ENCODE measurements at regions of chr18 and their contacts with region 1.

Region 1: GRCh38 chr18:3281456-3282400 is 19.8 kb downstream of the MYL12B start:
- DNase-seq: peak in 7 of 9 donors; percentile 51 to 77 (median 68)
- ATAC-seq: peak; percentile 93
- H3K4me3 ChIP-seq: no peak overlapping the region
- H3K4me3 Mint-ChIP-seq: no peak overlapping the region
- H3K27ac ChIP-seq: no peak overlapping the region
- H3K27ac Mint-ChIP-seq: no peak overlapping the region
- H3K4me1 ChIP-seq: no peaks in the 10 kb centered on the region
- H3K4me1 Mint-ChIP-seq: peaks cover 0 to 8% (median 0%) of the 10 kb centered on the region in 7 donors
- H3K27me3 ChIP-seq: no peaks in the 10 kb centered on the region
- H3K27me3 Mint-ChIP-seq: no peaks in the 10 kb centered on the region

Region 2: DNA sequence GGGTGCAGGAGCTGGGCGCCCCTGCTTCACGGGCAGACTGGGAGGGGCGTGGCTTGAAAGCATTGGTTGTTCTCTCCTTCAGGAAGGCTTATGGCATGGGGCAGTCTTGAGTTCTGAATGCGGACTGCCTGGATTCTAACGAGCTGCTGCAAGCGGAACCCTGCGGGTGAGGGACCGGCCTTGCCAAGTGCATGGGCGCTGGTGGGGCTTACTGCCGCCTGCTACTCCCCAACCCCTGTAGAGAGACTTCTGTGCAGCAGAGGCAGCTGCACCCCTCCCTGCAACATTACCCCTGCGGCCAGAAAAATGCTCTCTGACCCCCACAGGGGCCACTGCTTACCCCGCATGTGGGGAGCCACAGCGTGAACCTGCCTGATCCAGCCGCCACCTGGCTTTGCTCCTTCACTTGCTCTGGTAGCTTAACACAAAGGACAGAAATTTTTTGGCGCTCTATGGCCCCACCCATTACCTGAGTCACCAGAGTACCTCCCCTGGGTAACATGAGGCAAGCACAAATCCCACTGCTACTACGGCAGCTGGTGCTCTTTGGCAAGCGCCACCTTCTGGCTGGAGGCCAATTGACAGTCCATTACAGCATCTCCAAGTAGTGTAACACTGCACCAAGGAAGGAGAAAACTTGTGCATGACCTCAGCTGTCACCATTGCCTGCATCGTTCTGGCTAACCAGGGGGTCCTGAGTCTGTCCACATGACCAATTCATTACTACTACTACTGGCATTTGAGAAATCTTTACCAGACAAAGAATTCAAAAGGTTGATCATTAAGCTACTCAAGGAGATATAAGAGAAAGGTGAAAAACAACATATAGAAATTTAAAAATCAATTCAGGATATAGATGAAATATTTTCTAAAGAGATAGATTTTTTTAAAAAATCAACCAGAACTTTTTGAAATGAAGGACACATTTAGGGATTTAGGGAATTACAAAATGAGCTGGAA is 15.6 kb after region 1 on chr18:
- CTCF ChIA-PET with region 1: interaction called, 3 read pairs
- POLR2A ChIA-PET with region 1: interaction called, 7 read pairs
- intact Hi-C with region 1: loop called (anchors 1 to 2 kb)
- DNase-seq: peak; percentile 74 to 93 (median 90)
- ATAC-seq: peak; percentile 100
- H3K4me3 ChIP-seq: peak overlapping the region; percentile 60
- H3K4me3 Mint-ChIP-seq: peak overlapping the region; percentile 89 to 98 (median 95)
- H3K27ac ChIP-seq: peak overlapping the region; percentile 62
- H3K27ac Mint-ChIP-seq: peak overlapping the region; percentile 21 to 93 (median 84)
- H3K4me1 ChIP-seq: peaks cover 6 to 9% of the 10 kb centered on the region in 2 donors
- H3K4me1 Mint-ChIP-seq: peaks cover 0 to 16% (median 10%) of the 10 kb centered on the region in 7 donors
- H3K27me3 ChIP-seq: no peaks in the 10 kb centered on the region
- H3K27me3 Mint-ChIP-seq: peaks cover 13 to 41% (median 30%) of the 10 kb centered on the region in 5 donors

Region 3: DNA sequence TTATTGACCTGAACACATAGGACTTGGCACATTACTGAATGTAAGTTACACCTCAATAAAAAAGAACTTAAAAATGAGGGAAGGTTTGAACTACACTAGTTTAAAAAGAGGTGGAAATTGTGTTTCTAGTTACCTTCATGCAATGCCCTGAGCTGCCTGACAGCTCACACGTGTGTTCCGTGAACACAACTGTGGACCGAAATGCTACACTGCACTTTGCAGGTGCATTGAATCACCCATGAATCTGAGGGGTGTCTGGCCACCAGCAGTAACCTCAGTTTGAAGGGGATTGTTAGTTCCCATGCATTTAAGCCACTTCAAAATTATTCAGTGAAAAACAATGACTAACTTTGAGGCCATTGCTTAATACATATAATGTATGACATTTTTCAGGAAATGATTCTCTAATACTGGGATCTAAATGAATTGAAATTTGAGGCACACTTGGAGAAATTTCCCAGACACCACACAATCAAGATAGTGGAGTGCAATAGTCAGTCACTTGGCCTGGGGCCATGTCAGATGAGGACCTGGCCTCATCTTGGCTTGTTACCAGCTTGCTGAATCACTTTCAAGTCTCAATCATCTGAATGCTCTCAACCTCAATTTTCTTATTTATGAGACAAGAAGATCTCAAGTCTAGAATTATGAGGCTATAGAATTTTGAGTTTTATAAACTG is 39.5 kb after region 1 on chr18:
- CTCF ChIA-PET with region 1: no interaction called
- POLR2A ChIA-PET with region 1: no interaction called
- intact Hi-C with region 1: loop called (anchors 1 to 5 kb)
- DNase-seq: no peak
- ATAC-seq: no peak
- H3K4me3 ChIP-seq: no peak overlapping the region
- H3K4me3 Mint-ChIP-seq: no peak overlapping the region
- H3K27ac ChIP-seq: no peak overlapping the region
- H3K27ac Mint-ChIP-seq: no peak overlapping the region
- H3K4me1 ChIP-seq: no peaks in the 10 kb centered on the region
- H3K4me1 Mint-ChIP-seq: peaks cover 0 to 8% (median 0%) of the 10 kb centered on the region in 7 donors
- H3K27me3 ChIP-seq: no peaks in the 10 kb centered on the region
- H3K27me3 Mint-ChIP-seq: peaks cover 4 to 13% (median 6%) of the 10 kb centered on the region in 5 donors

Region 4: GRCh38 chr18:3585656-3586509 is 304.2 kb after region 1 on chr18:
- CTCF ChIA-PET with region 1: interaction called, 7 read pairs
- POLR2A ChIA-PET with region 1: interaction called, 6 read pairs
- intact Hi-C with region 1: loop called (anchors 1 kb)
- DNase-seq: peak in 8 of 9 donors; percentile 40 to 60 (median 48)
- ATAC-seq: peak; percentile 90
- H3K4me3 ChIP-seq: no peak overlapping the region
- H3K4me3 Mint-ChIP-seq: peak overlapping the region in 3 of 10 donors; percentile 4 to 34 (median 16)
- H3K27ac ChIP-seq: no peak overlapping the region
- H3K27ac Mint-ChIP-seq: peak overlapping the region in 7 of 9 donors; percentile 28 to 93 (median 65)
- H3K4me1 ChIP-seq: no peaks in the 10 kb centered on the region
- H3K4me1 Mint-ChIP-seq: peaks cover 0 to 29% (median 11%) of the 10 kb centered on the region in 7 donors
- H3K27me3 ChIP-seq: no peaks in the 10 kb centered on the region
- H3K27me3 Mint-ChIP-seq: no peaks in the 10 kb centered on the region

Region 5: DNA sequence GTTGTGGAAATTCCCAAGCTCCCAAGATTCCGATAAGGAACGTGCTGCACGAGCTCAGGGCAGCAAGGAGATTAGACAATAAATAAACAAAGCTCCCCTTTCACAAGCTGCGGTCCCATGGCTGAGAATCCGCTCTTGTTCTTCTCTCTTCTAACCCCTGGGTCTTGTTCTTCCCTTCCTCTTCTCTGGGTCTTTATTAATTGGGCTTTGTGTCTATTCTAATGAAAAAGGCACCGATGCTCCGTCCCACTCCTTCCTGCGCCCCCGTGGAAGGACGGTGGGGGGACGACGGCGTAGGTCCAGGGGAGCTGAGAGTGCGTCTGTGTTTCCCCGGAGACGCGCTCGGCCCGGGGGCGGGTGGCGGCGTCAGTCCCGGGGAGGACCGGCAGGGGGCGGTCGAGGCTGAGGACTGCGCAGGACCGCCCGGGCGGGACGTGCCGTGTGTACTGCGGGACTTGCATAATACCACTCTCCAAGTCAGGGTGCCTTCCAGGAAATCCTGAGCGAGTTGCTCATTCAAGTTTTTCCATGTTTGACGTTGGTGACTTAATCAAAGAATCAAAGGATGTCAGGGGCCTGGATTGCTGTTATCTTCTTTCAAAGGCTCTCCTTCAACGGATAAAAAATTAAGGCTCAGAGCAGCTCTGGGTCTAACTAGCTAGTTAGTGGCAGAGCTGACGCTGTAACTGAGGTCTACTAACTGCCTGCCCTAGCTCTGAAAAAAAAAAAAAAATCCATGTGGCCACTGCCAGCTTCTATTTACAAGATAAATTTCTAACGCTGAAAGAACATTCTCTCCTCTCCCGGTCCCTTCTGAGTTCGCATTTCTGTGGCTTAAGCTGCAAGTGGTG is 489.6 kb after region 1 on chr18:
- CTCF ChIA-PET with region 1: no interaction called
- POLR2A ChIA-PET with region 1: no interaction called
- intact Hi-C with region 1: loop called in 1 of 2 experiments (anchors 10 kb)
- DNase-seq: peak; percentile 31 to 91 (median 67)
- ATAC-seq: peak; percentile 99
- H3K4me3 ChIP-seq: peak overlapping the region; percentile 34
- H3K4me3 Mint-ChIP-seq: peak overlapping the region; percentile 26 to 78 (median 70)
- H3K27ac ChIP-seq: no peak overlapping the region
- H3K27ac Mint-ChIP-seq: peak overlapping the region in 1 of 9 donors; percentile 7
- H3K4me1 ChIP-seq: peaks cover 0 to 5% of the 10 kb centered on the region in 2 donors
- H3K4me1 Mint-ChIP-seq: peaks cover 7 to 19% (median 13%) of the 10 kb centered on the region in 7 donors
- H3K27me3 ChIP-seq: peaks cover 2 to 4% of the 10 kb centered on the region in 2 donors
- H3K27me3 Mint-ChIP-seq: peaks cover 16 to 57% (median 33%) of the 10 kb centered on the region in 5 donors

Region 6: DNA sequence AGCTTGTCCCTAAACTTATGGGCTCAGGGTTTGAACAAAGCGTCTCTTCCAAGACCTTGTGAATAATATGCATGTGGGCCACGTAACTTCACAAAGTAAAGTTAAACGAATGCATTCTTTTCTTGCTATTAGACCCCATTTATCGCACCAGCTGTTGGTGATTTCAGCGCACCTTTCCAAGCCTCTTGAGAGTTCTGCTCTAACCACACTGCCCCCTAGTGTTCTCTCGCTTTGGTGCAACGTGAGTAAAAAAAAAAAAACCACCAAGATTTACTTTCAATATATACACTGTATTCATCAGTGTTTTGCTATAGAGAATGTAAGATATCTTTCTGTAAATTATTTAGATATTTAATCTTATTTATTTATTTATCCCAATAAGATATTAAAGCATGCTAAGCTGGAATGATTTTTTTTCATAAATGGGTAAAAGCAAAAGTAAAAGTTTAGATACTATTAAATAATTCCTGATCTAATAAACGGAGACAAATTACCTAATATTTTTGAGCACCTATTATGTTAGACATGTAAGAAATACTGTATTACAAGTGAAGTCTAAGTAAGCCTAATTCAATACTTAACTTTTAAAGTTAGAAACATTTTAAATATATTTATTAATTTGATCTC is 713.9 kb after region 1 on chr18:
- CTCF ChIA-PET with region 1: no interaction called
- POLR2A ChIA-PET with region 1: no interaction called
- intact Hi-C with region 1: loop called in 1 of 2 experiments (anchors 5 kb)
- DNase-seq: peak in 8 of 9 donors; percentile 8 to 57 (median 40)
- ATAC-seq: peak; percentile 68
- H3K4me3 ChIP-seq: no peak overlapping the region
- H3K4me3 Mint-ChIP-seq: no peak overlapping the region
- H3K27ac ChIP-seq: no peak overlapping the region
- H3K27ac Mint-ChIP-seq: no peak overlapping the region
- H3K4me1 ChIP-seq: no peaks in the 10 kb centered on the region
- H3K4me1 Mint-ChIP-seq: peaks cover 0 to 5% (median 0%) of the 10 kb centered on the region in 7 donors
- H3K27me3 ChIP-seq: no peaks in the 10 kb centered on the region
- H3K27me3 Mint-ChIP-seq: peaks cover 0 to 12% (median 0%) of the 10 kb centered on the region in 5 donors